Activated CD4-positive, alpha-beta memory T cell treated with anti-CD3 and anti-CD28 coated beads, Interleukin-2, amount 10 ng/mL, durations not matched to agents 7 days and 5 days (primary cell): ENCODE measurements at regions of chr17 and their contacts with region 1.

Region 1: DNA sequence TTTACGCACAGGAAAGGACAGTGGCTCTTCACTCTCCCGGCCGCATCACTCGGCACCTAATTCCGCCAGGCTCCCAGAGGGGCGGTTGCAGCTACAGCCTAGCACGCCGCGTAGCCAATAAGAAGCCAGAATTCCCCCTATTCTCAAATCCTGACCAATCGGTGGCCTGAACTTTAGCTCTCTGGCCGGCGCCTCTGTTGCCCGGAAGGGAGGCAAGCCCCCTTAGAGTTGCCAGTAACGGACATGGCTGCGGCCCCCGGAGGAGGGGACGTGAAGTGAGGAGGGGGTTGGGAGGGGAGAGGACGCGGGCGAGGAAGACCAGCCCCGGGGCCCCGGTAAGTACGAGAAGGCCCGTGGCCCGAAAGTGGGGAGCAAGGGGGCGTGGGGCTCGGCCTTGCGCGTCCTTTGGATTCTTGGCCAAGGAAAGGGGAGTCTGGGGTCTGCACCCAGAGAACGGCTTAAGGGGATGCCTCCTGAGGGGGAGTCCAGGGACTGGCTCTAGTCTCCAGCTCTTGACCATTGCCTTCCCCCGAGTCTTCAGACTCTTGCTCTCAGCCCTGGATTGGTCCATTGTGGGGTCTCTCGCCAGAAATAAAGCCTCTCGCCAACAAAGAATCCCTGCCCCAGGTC is at the start of gene TMEM94:
- DNase-seq: peak; percentile 94
- H3K4me3 Mint-ChIP-seq: peak within 1 kb of the TSS; percentile 87
- H3K27ac Mint-ChIP-seq: peak within 1 kb of the TSS; percentile 72
- H3K4me1 Mint-ChIP-seq: peaks cover 35% of the 10 kb centered on the region
- H3K27me3 Mint-ChIP-seq: no peaks in the 10 kb centered on the region
- total RNA-seq, gene TMEM94: 76.4 to 81.9 TPM

Region 2: GRCh38 chr17:75487351-75488070 is 31.0 kb after region 1 on chr17:
- CTCF ChIA-PET with region 1: interaction called, 14 read pairs
- POLR2A ChIA-PET with region 1: interaction called, 10 read pairs
- DNase-seq: peak; percentile 71
- H3K4me3 Mint-ChIP-seq: peak overlapping the region; percentile 12
- H3K27ac Mint-ChIP-seq: peak overlapping the region; percentile 87
- H3K4me1 Mint-ChIP-seq: peaks cover 23% of the 10 kb centered on the region
- H3K27me3 Mint-ChIP-seq: no peaks in the 10 kb centered on the region

Region 3: DNA sequence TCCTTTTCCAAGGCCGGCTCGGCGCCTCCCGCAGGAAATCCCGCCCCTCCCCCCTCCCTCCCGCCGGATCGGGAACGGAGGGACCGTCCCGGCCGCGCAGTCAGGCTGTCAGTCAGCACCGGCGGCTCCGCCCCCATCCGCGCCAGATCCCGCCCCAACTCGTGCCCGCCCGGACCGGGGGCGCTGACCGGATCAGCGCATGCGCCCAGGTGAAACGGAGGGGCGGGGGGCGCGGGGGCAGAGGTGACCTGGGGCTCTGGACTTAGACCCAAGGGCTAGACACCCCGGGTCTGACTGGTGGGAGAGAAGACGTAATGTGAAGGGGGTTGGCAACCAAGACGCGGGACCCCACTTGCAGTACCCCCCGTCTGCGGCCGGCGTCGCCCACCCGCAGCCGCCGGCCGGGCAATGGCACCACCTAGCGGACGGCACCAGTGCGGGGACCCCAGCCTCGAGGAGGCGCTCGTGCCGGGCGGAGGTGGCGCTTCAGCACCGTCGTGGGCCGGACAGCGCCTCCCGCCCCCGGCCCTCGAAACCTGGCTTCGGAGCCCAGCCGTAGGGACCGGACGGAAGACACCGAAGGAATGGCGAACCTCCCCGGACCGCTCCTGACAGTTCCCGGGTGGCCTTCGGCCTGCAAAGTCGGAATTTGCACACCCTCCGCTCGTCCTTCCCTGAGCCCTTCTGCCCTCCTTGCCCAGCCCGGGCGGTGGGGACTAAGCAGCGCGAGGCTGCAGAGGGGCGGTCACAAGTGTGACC is 59.1 kb after region 1 on chr17 and contains the start of gene CASKIN2:
- CTCF ChIA-PET with region 1: interaction called, 13 read pairs
- POLR2A ChIA-PET with region 1: interaction called, 13 read pairs
- DNase-seq: peak; percentile 82
- H3K4me3 Mint-ChIP-seq: peak within 1 kb of the TSS; percentile 65
- H3K27ac Mint-ChIP-seq: no peak within 1 kb of the TSS
- H3K4me1 Mint-ChIP-seq: peaks cover 30% of the 10 kb centered on the region
- H3K27me3 Mint-ChIP-seq: peaks cover 3% of the 10 kb centered on the region
- total RNA-seq, gene CASKIN2: 1.5 to 1.9 TPM

Region 4: GRCh38 chr17:75535119-75535537 is 78.6 kb after region 1 on chr17:
- CTCF ChIA-PET with region 1: interaction called, 4 read pairs
- POLR2A ChIA-PET with region 1: interaction called, 10 read pairs
- DNase-seq: peak; percentile 88
- H3K4me3 Mint-ChIP-seq: peak overlapping the region; percentile 50
- H3K27ac Mint-ChIP-seq: peak overlapping the region; percentile 98
- H3K4me1 Mint-ChIP-seq: peaks cover 30% of the 10 kb centered on the region
- H3K27me3 Mint-ChIP-seq: no peaks in the 10 kb centered on the region

Region 5: GRCh38 chr17:75594499-75595276 is 138.2 kb after region 1 on chr17:
- CTCF ChIA-PET with region 1: no interaction called
- POLR2A ChIA-PET with region 1: no interaction called
- DNase-seq: no peak
- H3K4me3 Mint-ChIP-seq: no peak overlapping the region
- H3K27ac Mint-ChIP-seq: no peak overlapping the region
- H3K4me1 Mint-ChIP-seq: peaks cover 11% of the 10 kb centered on the region
- H3K27me3 Mint-ChIP-seq: no peaks in the 10 kb centered on the region

Region 6: GRCh38 chr17:75667021-75667790 is 210.7 kb after region 1 on chr17 and contains the starts of genes RECQL5 and SAP30BP:
- CTCF ChIA-PET with region 1: no interaction called
- POLR2A ChIA-PET with region 1: interaction called, 10 read pairs
- DNase-seq: peak; percentile 98
- H3K4me3 Mint-ChIP-seq: peak within 1 kb of the TSS; percentile 55
- H3K27ac Mint-ChIP-seq: peak within 1 kb of the TSS; percentile 23
- H3K4me1 Mint-ChIP-seq: peaks cover 28% of the 10 kb centered on the region
- H3K27me3 Mint-ChIP-seq: no peaks in the 10 kb centered on the region
- total RNA-seq, gene RECQL5: 38.3 TPM
- total RNA-seq, gene SAP30BP: 87.2 to 89.6 TPM